ENCODE measurements at regions of chr3 and their contacts with region 1.

Region 1: GRCh38 chr3:66353530-66353929 is 132.7 kb downstream of the SLC25A26 start:
- DNase-seq: no peak
- ATAC-seq: no peak
- H3K4me3 ChIP-seq: no peak overlapping the region
- H3K27ac ChIP-seq: no peak overlapping the region
- H3K4me1 ChIP-seq: peaks cover 7% of the 10 kb centered on the region
- H3K27me3 ChIP-seq: no peaks in the 10 kb centered on the region
- CTCF ChIP-seq: no peak
- EP300 ChIP-seq: no peak
- POLR2A ChIP-seq: no peak
- RAD21 ChIP-seq: no peak

Region 2: GRCh38 chr3:66195347-66195783 is 158.2 kb before region 1 on chr3:
- CTCF ChIA-PET with region 1: no interaction called
- POLR2A ChIA-PET with region 1: no interaction called
- RAD21 ChIA-PET with region 1: no interaction called
- SMC1A ChIA-PET with region 1: no interaction called
- in situ Hi-C with region 1: no loop called
- intact Hi-C with region 1: no loop called
- DNase-seq: no peak
- ATAC-seq: no peak
- H3K4me3 ChIP-seq: no peak overlapping the region
- H3K27ac ChIP-seq: no peak overlapping the region
- H3K4me1 ChIP-seq: no peaks in the 10 kb centered on the region
- H3K27me3 ChIP-seq: peaks cover 0 to 4% of the 10 kb centered on the region in 2 experiments; a peak in 2 of 4 replicates
- CTCF ChIP-seq: no peak
- EP300 ChIP-seq: no peak
- POLR2A ChIP-seq: no peak
- RAD21 ChIP-seq: no peak

Region 3: DNA sequence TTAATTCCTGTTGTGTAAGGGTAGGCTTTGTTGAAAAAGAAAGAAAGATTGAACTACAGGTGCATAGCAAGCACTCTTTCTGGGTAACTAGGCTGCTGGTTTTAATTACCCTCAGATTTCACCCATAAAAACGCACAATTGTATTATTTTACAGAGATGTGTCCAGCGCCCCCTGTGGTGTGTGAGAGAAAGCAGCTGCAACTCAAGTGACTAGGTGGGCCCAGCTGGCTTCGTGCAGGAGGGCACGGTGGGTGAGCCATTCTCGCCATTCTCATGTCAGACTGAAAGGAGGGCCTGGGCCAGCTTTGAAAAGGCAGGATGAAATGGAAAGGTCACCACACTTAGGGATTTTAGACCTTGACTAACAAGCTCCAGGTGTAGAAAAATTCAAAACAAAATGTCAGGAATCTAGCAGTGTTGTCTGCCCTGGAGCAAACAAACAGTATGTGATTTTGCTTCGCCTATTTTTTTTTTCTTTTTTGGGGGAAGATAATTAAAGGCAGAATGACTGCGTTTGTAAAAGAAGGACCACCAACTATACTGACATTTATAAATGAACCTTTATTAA is 24.8 kb after region 1 on chr3:
- CTCF ChIA-PET with region 1: interaction called, 18 read pairs
- POLR2A ChIA-PET with region 1: no interaction called
- RAD21 ChIA-PET with region 1: no interaction called
- SMC1A ChIA-PET with region 1: interaction called, 10 read pairs
- in situ Hi-C with region 1: no loop called
- intact Hi-C with region 1: no loop called
- DNase-seq: no peak
- ATAC-seq: peak; percentile 61
- H3K4me3 ChIP-seq: no peak overlapping the region
- H3K27ac ChIP-seq: no peak overlapping the region
- H3K4me1 ChIP-seq: no peaks in the 10 kb centered on the region
- H3K27me3 ChIP-seq: no peaks in the 10 kb centered on the region
- CTCF ChIP-seq: peak; percentile 40 to 67 (median 63)
- EP300 ChIP-seq: no peak
- POLR2A ChIP-seq: no peak
- RAD21 ChIP-seq: peak; percentile 40